Motor neuron (in vitro differentiated cells): ENCODE measurements at regions of chr6 and their contacts with region 1.

Region 1: DNA sequence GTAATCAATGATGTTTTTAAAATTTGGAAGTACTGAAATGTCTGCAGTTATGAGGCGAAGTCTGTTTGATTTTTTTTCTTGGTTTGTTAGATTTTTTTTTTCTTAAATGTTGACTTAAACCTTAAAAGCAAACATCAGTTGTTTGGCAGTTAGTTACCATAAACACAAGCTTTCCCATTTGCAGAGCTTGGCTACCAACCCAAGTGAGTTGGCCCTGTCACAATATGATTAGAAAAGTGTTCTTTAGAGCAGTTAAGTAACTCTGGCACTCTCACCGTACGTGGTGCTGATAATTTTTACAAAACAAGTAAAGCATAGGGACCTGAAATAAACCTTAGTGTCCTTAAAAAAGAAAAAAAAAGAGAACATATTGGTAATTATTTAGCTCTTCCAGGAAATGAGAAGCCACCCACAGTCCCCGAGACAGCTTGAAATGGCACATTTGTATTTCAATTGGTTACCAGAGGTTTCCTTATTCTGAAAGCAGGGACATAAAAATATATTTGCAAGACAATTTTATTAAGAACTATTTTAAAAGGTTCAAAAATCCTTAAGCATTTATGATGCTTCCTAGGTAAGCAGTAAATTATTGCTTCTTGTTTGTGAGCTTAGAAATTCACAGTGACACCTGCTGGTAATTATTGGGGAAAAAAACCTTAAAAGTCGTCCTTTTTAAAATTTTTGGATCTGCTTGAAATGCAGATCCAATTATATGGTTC is 3.9 kb downstream of the HEY2 start:
- ATAC-seq: no peak
- H3K4me3 ChIP-seq: no peak overlapping the region
- H3K27ac ChIP-seq: no peak overlapping the region
- H3K4me1 ChIP-seq: peaks cover 8 to 15% of the 10 kb centered on the region in 2 donors

Region 2: GRCh38 chr6:125380474-125380873 is 372.9 kb before region 1 on chr6:
- in situ Hi-C with region 1: no loop called
- ATAC-seq: no peak
- H3K4me3 ChIP-seq: no peak overlapping the region
- H3K27ac ChIP-seq: no peak overlapping the region
- H3K4me1 ChIP-seq: no peaks in the 10 kb centered on the region

Region 3: GRCh38 chr6:125558907-125559306 is 194.5 kb before region 1 on chr6:
- in situ Hi-C with region 1: loop called in 1 of 9 experiments (anchors 25 kb)
- ATAC-seq: peak in 4 of 8 experiments; percentile 24 to 38 (median 31)
- H3K4me3 ChIP-seq: no peak overlapping the region
- H3K27ac ChIP-seq: no peak overlapping the region
- H3K4me1 ChIP-seq: peaks cover 7 to 9% of the 10 kb centered on the region in 2 donors

Region 4: GRCh38 chr6:125931733-125932450 is 178.5 kb after region 1 on chr6:
- in situ Hi-C with region 1: no loop called
- ATAC-seq: no peak
- H3K4me3 ChIP-seq: no peak overlapping the region
- H3K27ac ChIP-seq: no peak overlapping the region
- H3K4me1 ChIP-seq: no peaks in the 10 kb centered on the region